Uterus (tissue), 4 donors: ENCODE measurements at regions of chr4 and their contacts with region 1.

Region 1: DNA sequence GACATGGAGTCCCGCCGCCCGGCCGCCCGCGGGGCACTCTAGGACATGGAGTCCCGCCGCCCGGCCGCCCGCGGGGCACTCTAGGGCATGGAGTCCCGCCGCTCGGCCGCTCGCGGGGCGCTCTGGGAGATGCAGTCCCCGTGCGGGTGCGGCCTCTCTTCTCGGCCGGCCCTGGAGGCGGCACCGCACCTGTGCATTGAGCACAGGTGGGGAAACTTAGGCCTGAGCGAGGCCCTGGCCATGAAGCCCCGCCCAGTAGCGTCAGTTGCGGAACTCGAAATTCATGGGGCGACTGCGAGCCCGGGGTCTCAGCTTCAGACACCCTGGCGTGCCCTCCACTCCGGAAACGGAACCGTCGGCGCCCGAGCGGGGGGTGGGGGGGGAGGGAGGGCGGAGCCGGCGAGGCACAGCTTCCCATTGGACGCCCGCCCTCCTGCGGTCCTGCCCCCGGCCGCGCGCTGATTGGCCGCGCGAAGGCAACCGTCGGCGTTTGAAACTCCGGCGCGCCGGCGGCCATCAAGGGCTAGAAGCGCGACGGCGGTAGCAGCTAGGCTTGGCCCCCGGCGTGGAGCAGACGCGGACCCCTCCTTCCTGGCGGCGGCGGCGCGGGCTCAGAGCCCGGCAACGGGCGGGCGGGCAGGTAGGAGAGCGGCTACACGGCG is at the starts of genes TACC3 and TMEM129:
- DNase-seq: peak; percentile 92
- H3K4me3 ChIP-seq: peak within 1 kb of the TSS; percentile 52 to 84
- H3K27ac ChIP-seq: peak within 1 kb of the TSS; percentile 78 to 87
- H3K4me1 ChIP-seq: peaks cover 0 to 19% of the 10 kb centered on the region in 2 donors
- H3K27me3 ChIP-seq: no peaks in the 10 kb centered on the region
- CTCF ChIP-seq: peak in 1 of 4 experiments; percentile 34
- POLR2A ChIP-seq: peak; percentile 54 to 56
- total RNA-seq, gene TACC3: 4.6 to 15.6 (median 7.3) TPM
- total RNA-seq, gene TMEM129: 31.0 to 99.7 (median 42.7) TPM

Region 2: DNA sequence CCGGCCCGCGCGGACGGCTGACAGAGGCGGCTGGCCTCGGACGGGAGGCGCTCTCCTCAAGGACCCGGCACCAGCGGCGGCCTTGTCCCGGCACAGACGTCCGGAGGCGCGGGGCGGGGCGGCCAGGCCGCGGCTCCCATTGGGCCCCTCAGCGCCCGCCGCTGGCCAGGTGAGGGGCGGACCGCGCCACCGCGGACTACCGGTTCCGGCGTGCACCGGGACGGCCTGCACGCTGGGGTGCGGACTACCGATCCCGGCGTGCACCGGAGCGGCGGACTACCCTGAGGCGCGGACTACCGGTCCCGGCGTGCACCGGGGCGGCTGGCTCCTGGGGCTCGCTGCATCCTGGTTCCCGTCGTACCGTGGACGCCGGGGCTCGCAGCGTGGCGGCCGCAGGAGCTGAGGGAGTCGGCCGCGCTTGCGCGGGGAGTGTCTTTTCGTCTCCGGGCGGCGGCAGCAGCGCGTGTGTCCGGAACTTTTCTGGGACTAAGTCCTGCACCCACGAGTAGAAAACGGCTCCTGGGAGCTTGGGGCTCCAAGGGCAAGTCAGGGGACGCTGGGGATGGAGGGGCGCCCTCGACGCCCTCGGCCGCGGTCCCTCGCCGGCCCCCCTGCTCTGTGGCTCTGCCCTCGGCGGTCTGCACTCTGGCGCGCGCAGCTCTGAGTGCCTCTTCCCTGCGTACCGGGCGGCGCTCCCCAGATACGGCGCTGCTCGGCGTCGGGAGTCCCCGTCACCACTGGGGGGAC is 135.1 kb after region 1 on chr4 and contains the start of gene LETM1:
- intact Hi-C with region 1: loop called (anchors 5 kb)
- DNase-seq: peak; percentile 93 to 95
- H3K4me3 ChIP-seq: peak within 1 kb of the TSS; percentile 83 to 98
- H3K27ac ChIP-seq: peak within 1 kb of the TSS; percentile 69 to 86
- H3K4me1 ChIP-seq: no peaks in the 10 kb centered on the region
- H3K27me3 ChIP-seq: no peaks in the 10 kb centered on the region
- CTCF ChIP-seq: peak in 3 of 4 experiments; percentile 4 to 26 (median 24)
- POLR2A ChIP-seq: peak; percentile 33 to 64
- total RNA-seq, gene LETM1: 12.4 to 44.3 (median 31.3) TPM